B cell (primary cell): ENCODE measurements at regions of chr19 and their contacts with region 1.

Region 1: DNA sequence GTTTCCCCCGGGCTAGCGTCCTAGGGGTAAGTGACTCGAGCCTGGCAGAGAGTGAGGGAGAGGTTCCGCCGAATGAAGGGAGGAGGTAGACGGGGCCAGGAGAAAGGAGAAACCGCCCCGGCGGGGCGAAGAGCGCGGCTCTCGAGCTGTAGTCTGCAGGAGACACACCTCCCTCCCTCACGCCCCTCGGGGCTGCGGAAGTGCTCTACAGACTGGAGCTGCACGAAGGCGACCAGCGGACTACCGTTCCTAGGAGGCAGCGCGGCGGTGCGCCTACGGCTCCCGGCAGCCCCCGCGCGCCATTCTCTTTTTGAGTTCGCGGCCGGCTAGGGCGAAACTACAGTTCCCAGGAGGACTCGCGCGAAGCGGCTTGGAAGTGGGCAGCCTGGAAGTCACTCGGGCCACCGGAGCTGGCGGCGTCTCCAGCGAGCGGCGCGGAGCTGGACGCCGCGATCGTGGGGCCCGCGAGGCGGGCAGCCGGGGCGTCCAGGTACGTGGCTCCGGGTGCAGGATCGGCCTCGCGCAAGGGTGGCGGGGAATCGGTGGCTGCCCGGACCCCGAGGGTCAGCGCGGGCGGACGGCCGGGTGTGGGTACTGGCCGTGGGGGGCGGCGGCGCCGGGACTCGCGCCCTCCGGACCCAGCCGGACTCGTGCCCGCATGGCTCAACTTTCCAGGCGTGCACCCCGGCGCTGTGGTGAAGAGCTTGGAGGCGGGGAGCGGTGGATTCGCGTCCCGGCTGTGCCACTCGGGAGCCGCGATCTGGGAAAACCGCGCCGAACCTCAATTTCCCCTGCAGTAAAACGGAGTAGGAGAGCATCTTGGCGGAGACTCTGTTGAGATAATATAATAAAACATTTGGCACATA is at the start of gene SIPA1L3:
- DNase-seq: peak; percentile 96
- ATAC-seq: peak; percentile 93
- H3K4me3 ChIP-seq: peak within 1 kb of the TSS; percentile 68 to 99 (median 94)
- H3K4me3 Mint-ChIP-seq: peak within 1 kb of the TSS; percentile 91
- H3K27ac ChIP-seq: peak within 1 kb of the TSS; percentile 64 to 84
- H3K27ac Mint-ChIP-seq: peak within 1 kb of the TSS; percentile 96
- H3K4me1 ChIP-seq: peaks cover 55 to 63% of the 10 kb centered on the region in 2 donors
- H3K4me1 Mint-ChIP-seq: peaks cover 58% of the 10 kb centered on the region
- H3K27me3 ChIP-seq: no peaks in the 10 kb centered on the region
- H3K27me3 Mint-ChIP-seq: no peaks in the 10 kb centered on the region
- CTCF ChIP-seq: no peak
- total RNA-seq, gene SIPA1L3: 290 and 295 TPM in 2 replicates

Region 2: GRCh38 chr19:37931881-37932655 is 25.0 kb after region 1 on chr19:
- CTCF ChIA-PET with region 1: interaction called, 31 read pairs
- POLR2A ChIA-PET with region 1: interaction called, 46 read pairs
- intact Hi-C with region 1: loop called (anchors 1 kb)
- DNase-seq: peak; percentile 72
- ATAC-seq: peak; percentile 6
- H3K4me3 ChIP-seq: peak overlapping the region; percentile 21 to 63 (median 55)
- H3K4me3 Mint-ChIP-seq: peak overlapping the region; percentile 85
- H3K27ac ChIP-seq: peak overlapping the region; percentile 78 to 85
- H3K27ac Mint-ChIP-seq: peak overlapping the region; percentile 87
- H3K4me1 ChIP-seq: peaks cover 86 to 95% of the 10 kb centered on the region in 2 donors
- H3K4me1 Mint-ChIP-seq: peaks cover 90% of the 10 kb centered on the region
- H3K27me3 ChIP-seq: no peaks in the 10 kb centered on the region
- H3K27me3 Mint-ChIP-seq: no peaks in the 10 kb centered on the region
- CTCF ChIP-seq: no peak

Region 3: DNA sequence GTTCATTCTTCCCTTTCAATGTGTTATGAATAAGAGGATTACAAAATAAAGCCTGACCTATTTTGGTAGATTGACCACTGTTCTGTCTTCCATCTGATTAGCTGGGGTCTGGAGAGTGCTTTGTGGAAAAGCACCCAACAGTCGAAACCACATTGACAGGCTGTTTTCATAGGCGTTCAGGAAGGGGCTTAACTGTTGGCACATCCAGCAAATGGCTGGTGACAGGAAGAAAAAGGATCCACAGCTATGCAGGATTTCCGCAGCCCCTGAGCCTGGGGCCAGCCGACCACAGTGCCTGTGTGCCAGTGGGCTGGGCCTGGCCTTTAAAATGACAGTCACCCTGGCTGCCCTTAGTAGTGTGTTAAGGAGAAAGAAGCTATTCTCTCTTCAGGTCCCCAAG is 113.2 kb after region 1 on chr19:
- CTCF ChIA-PET with region 1: interaction called, 21 read pairs
- POLR2A ChIA-PET with region 1: no interaction called
- intact Hi-C with region 1: no loop called
- DNase-seq: no peak
- ATAC-seq: peak; percentile 21
- H3K4me3 ChIP-seq: no peak overlapping the region
- H3K4me3 Mint-ChIP-seq: peak overlapping the region; percentile 2
- H3K27ac ChIP-seq: peak overlapping the region; percentile 30 to 79
- H3K27ac Mint-ChIP-seq: peak overlapping the region; percentile 73
- H3K4me1 ChIP-seq: peaks cover 62 to 70% of the 10 kb centered on the region in 2 donors
- H3K4me1 Mint-ChIP-seq: peaks cover 84% of the 10 kb centered on the region
- H3K27me3 ChIP-seq: no peaks in the 10 kb centered on the region
- H3K27me3 Mint-ChIP-seq: no peaks in the 10 kb centered on the region
- CTCF ChIP-seq: no peak

Region 4: DNA sequence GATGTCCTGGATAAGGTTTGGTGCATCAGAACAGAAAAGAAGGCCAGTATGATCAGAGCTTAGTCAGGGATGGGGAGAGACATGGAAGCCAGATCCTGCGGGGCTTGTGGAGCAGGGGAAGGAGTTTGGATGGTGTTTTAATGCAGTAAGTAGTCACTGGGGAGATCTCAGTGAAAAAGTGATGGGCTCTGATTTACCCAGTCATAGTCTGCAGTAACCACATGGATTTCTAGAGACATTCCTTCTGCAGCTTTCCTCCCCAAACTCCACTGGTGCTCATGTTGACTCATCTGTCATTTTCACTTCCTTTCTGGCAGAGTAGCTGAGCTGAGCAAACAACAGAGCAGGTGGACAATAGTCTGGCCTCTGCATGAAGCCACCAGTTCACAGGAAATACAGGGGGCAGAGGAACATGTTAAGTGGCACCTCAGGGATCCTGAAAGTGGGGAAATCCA is 172.9 kb after region 1 on chr19:
- CTCF ChIA-PET with region 1: interaction called, 41 read pairs
- POLR2A ChIA-PET with region 1: interaction called, 3 read pairs
- intact Hi-C with region 1: loop called (anchors 1 kb)
- DNase-seq: peak; percentile 48
- ATAC-seq: peak; percentile 83
- H3K4me3 ChIP-seq: no peak overlapping the region
- H3K4me3 Mint-ChIP-seq: peak overlapping the region; percentile 33
- H3K27ac ChIP-seq: peak overlapping the region; percentile 41 to 64
- H3K27ac Mint-ChIP-seq: peak overlapping the region; percentile 88
- H3K4me1 ChIP-seq: peaks cover 18 to 23% of the 10 kb centered on the region in 2 donors
- H3K4me1 Mint-ChIP-seq: peaks cover 22% of the 10 kb centered on the region
- H3K27me3 ChIP-seq: no peaks in the 10 kb centered on the region
- H3K27me3 Mint-ChIP-seq: no peaks in the 10 kb centered on the region
- CTCF ChIP-seq: no peak

Region 5: DNA sequence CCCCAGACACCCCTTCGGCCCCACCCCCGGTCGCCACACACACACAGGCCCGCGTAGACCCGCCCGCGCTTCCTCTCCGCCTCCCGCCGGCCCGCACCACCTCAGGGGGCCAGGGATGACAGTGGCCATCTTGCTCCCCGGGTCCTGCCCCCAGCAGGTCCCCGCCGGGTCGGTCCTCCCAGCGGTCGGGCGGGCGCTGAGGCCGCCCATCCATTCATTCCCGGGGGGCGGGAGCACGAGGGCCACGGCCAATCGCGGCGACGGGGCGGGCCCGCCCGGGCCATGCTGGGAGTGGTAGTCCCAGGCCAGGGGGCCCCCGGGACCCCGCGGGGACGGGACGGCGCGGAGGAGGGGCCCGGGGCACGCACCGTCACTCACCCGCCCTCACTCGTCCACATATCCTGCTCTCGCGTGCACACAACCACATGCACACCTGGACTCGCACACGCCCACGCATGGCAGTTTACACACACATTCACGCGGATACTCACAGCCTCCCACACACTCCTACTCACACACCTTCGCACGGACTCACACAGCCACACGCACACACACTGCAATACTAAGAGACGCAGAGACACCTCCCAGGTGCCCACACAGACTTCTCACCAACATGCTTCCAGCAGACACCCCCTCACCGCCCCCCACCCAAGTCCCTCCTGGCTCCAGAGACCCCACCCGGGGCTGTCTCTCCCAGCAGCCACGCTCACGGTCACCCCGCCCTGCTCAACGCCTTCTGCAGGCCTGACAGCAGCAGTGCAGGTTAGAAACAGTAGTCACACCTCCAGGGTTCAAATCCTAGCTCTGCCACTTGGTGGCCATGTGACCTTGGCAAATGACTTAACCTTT is 317.1 kb after region 1 on chr19 and contains the start of gene DPF1:
- CTCF ChIA-PET with region 1: interaction called, 9 read pairs
- POLR2A ChIA-PET with region 1: no interaction called
- intact Hi-C with region 1: loop called (anchors 10 kb)
- DNase-seq: peak; percentile 76
- ATAC-seq: peak; percentile 83
- H3K4me3 ChIP-seq: peak within 1 kb of the TSS in 4 of 5 experiments; percentile 26 to 59 (median 47)
- H3K4me3 Mint-ChIP-seq: peak within 1 kb of the TSS; percentile 92
- H3K27ac ChIP-seq: no peak within 1 kb of the TSS
- H3K27ac Mint-ChIP-seq: peak within 1 kb of the TSS; percentile 57
- H3K4me1 ChIP-seq: peaks cover 29 to 48% of the 10 kb centered on the region in 2 donors
- H3K4me1 Mint-ChIP-seq: peaks cover 32% of the 10 kb centered on the region
- H3K27me3 ChIP-seq: peaks cover 0 to 77% (median 48%) of the 10 kb centered on the region in 4 experiments
- H3K27me3 Mint-ChIP-seq: peaks cover 52% of the 10 kb centered on the region
- CTCF ChIP-seq: no peak
- total RNA-seq, gene DPF1: not detected in 2 replicates

Region 6: GRCh38 chr19:38335949-38336637 is 429.0 kb after region 1 on chr19:
- CTCF ChIA-PET with region 1: interaction called, 9 read pairs
- POLR2A ChIA-PET with region 1: interaction called, 4 read pairs
- intact Hi-C with region 1: loop called (anchors 1 kb)
- DNase-seq: peak; percentile 96
- ATAC-seq: peak; percentile 64
- H3K4me3 ChIP-seq: peak overlapping the region; percentile 52 to 85 (median 80)
- H3K4me3 Mint-ChIP-seq: peak overlapping the region; percentile 97
- H3K27ac ChIP-seq: peak overlapping the region; percentile 89 to 95
- H3K27ac Mint-ChIP-seq: peak overlapping the region; percentile 97
- H3K4me1 ChIP-seq: peaks cover 5 to 11% of the 10 kb centered on the region in 2 donors
- H3K4me1 Mint-ChIP-seq: peaks cover 13% of the 10 kb centered on the region
- H3K27me3 ChIP-seq: no peaks in the 10 kb centered on the region
- H3K27me3 Mint-ChIP-seq: no peaks in the 10 kb centered on the region
- CTCF ChIP-seq: no peak